ENCODE measurements at regions of chr9 and their contacts with region 1.

Region 1: DNA sequence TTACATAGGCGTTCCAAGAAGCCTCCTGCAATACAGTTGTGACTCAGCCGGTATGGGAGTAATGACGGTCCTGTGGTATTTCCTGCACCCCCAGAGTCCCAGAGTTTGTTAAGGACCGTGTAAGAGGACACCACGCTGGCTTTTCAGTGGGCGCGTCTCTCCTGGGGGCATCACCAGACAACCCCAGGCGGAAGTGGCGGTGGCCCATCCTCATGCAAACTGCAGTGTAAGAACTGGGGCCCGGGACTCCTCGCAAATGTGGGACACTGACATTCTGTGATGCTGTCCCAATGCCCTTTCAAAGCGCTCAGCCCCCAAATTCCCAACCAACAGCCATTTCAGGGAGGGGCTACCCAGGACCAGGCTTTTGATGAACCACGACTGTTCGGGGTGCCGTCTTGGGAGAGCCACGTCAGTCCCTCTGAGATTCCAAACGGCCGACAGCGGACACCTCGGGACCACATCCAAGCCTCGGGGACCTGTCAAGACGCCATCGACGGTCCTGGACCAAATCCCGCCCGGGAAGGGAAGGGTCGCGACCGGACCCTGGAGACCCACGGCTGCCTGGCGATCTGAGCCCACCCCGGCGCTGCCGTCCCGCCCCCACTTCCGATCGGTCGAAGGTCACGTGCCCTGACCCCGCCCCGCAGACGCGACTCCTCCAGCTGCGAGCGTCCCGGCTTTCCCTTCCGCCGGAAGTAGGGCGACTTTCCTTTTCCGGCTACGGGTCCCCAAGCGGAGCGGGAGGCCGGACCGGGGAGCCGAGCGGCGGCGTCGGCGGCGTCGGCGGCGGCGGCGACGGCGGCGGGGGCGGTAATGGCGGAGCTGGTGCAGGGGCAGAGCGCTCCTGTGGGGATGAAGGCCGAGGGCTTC is at the start of gene FUBP3:
- DNase-seq: peak; percentile 86 to 92
- H3K4me3 ChIP-seq: peak within 1 kb of the TSS; percentile 99
- H3K27ac ChIP-seq: peak within 1 kb of the TSS; percentile 86
- H3K4me1 ChIP-seq: peaks cover 23% of the 10 kb centered on the region
- H3K27me3 ChIP-seq: no peaks in the 10 kb centered on the region
- CTCF ChIP-seq: no peak
- total RNA-seq, gene FUBP3: 50.3 and 75.6 TPM in 2 replicates

Region 2: DNA sequence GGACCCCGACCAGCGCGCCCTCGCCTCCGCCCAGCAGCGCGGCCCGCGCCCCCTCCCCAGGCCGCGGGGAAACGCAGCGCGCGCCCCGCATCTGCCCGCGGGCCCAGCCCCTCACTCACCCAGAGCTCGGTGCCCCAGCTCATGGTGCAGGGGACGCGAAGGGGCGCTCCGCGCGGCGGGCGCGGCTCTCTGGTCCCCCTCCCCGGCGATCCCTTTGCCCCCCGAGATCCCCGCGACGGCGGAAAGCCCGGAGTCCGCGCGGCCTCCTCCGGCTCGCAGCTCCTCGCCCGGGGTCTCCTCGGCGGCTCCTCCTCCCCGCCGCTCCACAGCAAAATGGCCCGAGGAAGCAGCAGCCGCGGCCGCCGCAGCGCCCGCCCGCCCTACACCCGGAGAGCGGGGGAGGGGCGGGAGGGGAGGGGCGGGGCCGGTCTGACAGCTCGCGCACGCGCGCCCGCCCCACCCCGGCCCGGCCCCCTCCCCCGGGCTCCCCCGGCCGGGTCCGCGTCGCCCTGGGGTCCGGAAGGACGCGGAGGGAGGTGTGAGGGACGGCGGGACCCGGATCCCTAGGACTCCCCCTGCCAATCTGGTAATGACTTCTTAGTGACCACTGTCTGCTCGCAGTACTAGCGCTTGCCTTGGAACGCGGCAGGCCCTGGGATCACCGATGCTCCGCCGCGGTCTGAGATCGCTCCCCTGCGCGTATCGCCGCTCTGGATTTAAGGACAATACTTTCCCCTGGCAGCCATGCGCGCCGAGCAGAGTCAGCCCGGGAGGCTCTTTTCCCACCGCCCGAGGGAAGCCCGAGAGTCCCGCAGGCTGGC is 536.1 kb before region 1 on chr9 and contains the start of gene FNBP1:
- CTCF ChIA-PET with region 1: no interaction called
- POLR2A ChIA-PET with region 1: no interaction called
- intact Hi-C with region 1: no loop called
- DNase-seq: peak; percentile 54 to 81
- H3K4me3 ChIP-seq: peak within 1 kb of the TSS; percentile 93
- H3K27ac ChIP-seq: peak within 1 kb of the TSS; percentile 16; the same call in 1 of the 2 replicates
- H3K4me1 ChIP-seq: peaks cover 31% of the 10 kb centered on the region
- H3K27me3 ChIP-seq: no peaks in the 10 kb centered on the region
- CTCF ChIP-seq: no peak
- total RNA-seq, gene FNBP1: 68.2 and 80.7 TPM in 2 replicates

Region 3: GRCh38 chr9:130417602-130418001 is 161.5 kb before region 1 on chr9:
- CTCF ChIA-PET with region 1: no interaction called
- POLR2A ChIA-PET with region 1: no interaction called
- intact Hi-C with region 1: no loop called
- DNase-seq: peak in 1 of 2 experiments; percentile 32
- H3K4me3 ChIP-seq: no peak overlapping the region
- H3K27ac ChIP-seq: no peak overlapping the region
- H3K4me1 ChIP-seq: peaks cover 15% of the 10 kb centered on the region
- H3K27me3 ChIP-seq: no peaks in the 10 kb centered on the region
- CTCF ChIP-seq: 0 out of 2 replicates have a peak, but pooled peaks have one; percentile 29

Region 4: DNA sequence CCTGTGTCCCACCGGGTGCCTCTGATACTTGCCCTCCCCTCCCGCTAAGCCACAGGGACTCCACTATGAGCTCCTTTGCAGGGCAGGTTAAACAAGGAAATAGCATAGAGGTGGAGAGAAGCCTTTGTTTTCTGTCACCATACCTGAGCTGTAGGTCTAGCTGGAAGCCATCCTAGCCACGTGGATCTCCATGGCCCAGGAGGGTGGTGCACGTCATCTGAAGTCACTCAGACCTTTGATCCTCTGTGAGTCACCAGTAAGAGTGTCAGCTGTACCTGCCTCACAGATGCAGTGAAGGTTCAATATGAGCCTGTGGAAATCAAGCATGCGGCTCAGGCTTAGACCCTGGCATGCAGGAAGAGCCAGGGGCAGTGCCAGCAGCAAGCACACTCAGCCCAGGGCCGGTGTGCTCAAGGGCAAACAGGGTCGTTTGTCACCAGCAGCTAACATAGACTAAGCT is 79.3 kb before region 1 on chr9:
- CTCF ChIA-PET with region 1: no interaction called
- POLR2A ChIA-PET with region 1: interaction called, 19 read pairs
- intact Hi-C with region 1: loop called (anchors 1 kb)
- DNase-seq: peak; percentile 87 to 95
- H3K4me3 ChIP-seq: no peak overlapping the region
- H3K27ac ChIP-seq: no peak overlapping the region
- H3K4me1 ChIP-seq: peaks cover 24% of the 10 kb centered on the region
- H3K27me3 ChIP-seq: no peaks in the 10 kb centered on the region
- CTCF ChIP-seq: no peak

Measured in PC-9 (cell line).